HCT116 (cell line): ENCODE measurements at regions of chrX and their contacts with region 1.

Region 1: GRCh38 chrX:70030301-70030767 is 19.4 kb downstream of the AWAT2 start:
- DNase-seq: peak; percentile 22
- ATAC-seq: peak; percentile 80
- H3K4me3 ChIP-seq: no peak overlapping the region
- H3K27ac ChIP-seq: no peak overlapping the region
- H3K4me1 ChIP-seq: peaks cover 2 to 10% of the 10 kb centered on the region in 2 experiments; a peak in 2 of 4 replicates
- H3K27me3 ChIP-seq: no peaks in the 10 kb centered on the region
- CTCF ChIP-seq: peak; percentile 38 to 72 (median 64); a peak in 5 of 6 replicates
- POLR2A ChIP-seq: no peak
- RAD21 ChIP-seq: peak; percentile 76

Region 2: GRCh38 chrX:69493193-69493592 is 537.1 kb before region 1 on chrX:
- CTCF ChIA-PET with region 1: interaction called, 5 read pairs
- POLR2A ChIA-PET with region 1: no interaction called
- RAD21 ChIA-PET with region 1: interaction called in 1 of 2 experiments, 5 read pairs
- intact Hi-C with region 1: loop called (anchors 1 kb)
- DNase-seq: peak; percentile 33
- ATAC-seq: peak; percentile 85
- H3K4me3 ChIP-seq: no peak overlapping the region
- H3K27ac ChIP-seq: no peak overlapping the region
- H3K4me1 ChIP-seq: peaks cover 0 to 6% of the 10 kb centered on the region in 2 experiments; a peak in 1 of 4 replicates
- H3K27me3 ChIP-seq: peaks cover 9% of the 10 kb centered on the region; the same call in 1 of the 2 replicates
- CTCF ChIP-seq: peak; percentile 39 to 53 (median 49); a peak in 5 of 6 replicates
- POLR2A ChIP-seq: no peak
- RAD21 ChIP-seq: peak; percentile 75

Region 3: DNA sequence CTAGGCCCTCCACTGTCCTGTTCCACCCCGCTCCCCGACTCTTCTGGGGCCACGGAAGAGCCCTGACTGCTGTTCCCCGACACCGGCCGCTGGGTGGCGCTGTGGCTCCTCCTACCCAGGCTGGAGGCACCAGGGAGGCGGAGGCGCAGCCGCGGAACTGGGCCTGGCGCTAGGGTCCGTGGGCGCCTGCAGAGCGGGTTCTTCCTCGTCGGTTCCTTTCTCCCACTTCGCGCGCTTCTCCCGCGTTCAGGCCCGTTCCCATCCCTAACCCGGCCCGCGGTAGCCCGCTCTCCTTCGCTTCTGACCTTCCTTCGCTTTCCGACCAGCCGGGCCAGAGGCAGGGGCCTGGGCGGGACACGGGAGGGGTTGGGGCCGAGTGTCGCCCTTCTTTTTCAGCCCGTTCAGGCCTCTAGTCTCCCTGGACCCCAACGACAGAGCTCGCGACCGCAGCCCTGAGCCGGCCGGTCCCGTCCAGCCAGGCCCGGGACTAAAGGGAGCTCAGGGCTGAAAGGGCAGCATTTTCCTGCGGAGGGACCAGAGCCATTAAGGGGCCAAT is 491.9 kb before region 1 on chrX:
- CTCF ChIA-PET with region 1: interaction called, 4 read pairs
- POLR2A ChIA-PET with region 1: no interaction called
- RAD21 ChIA-PET with region 1: no interaction called
- intact Hi-C with region 1: loop called (anchors 2 kb)
- DNase-seq: peak; percentile 29
- ATAC-seq: peak; percentile 98
- H3K4me3 ChIP-seq: no peak overlapping the region
- H3K27ac ChIP-seq: no peak overlapping the region
- H3K4me1 ChIP-seq: peaks cover 0 to 4% of the 10 kb centered on the region in 2 experiments; a peak in 1 of 4 replicates
- H3K27me3 ChIP-seq: no peaks in the 10 kb centered on the region
- CTCF ChIP-seq: peak; percentile 60 to 69 (median 64)
- POLR2A ChIP-seq: no peak
- RAD21 ChIP-seq: peak; percentile 90

Region 4: DNA sequence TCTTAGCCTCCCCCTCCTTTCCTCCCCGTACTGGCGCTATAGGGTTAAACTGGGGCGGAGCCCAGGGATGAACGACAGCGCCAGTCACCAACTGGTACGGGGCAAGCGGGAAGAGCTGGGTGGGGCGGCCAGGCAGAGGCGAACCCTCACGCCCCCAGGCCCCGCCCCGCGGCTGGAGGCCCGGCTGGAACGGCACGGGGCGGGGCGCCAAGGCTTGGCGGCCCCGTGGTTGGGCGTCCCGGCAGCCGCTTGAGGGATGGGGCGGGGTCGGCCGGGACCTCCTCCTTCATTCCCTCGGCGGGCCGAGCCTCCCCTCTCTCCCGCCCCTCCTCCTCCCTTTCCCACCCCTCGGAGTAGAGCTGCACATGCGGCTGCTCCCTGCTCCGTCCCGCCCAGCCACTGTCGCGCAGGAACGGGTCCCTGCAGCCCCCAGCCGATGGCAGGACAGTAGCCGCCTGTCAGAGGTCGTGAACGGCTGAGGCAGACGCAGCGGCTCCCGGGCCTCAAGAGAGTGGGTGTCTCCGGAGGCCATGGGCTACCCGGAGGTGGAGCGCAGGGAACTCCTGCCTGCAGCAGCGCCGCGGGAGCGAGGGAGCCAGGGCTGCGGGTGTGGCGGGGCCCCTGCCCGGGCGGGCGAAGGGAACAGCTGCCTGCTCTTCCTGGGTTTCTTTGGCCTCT is 414.4 kb before region 1 on chrX and contains the start of gene EDA:
- CTCF ChIA-PET with region 1: no interaction called
- POLR2A ChIA-PET with region 1: no interaction called
- RAD21 ChIA-PET with region 1: no interaction called
- intact Hi-C with region 1: loop called (anchors 5 kb)
- DNase-seq: peak; percentile 61
- ATAC-seq: peak; percentile 96
- H3K4me3 ChIP-seq: peak within 1 kb of the TSS; percentile 54 to 61
- H3K27ac ChIP-seq: no peak within 1 kb of the TSS; the same call in 1 of the 2 replicates
- H3K4me1 ChIP-seq: peaks cover 0 to 3% of the 10 kb centered on the region in 2 experiments; a peak in 1 of 4 replicates
- H3K27me3 ChIP-seq: no peaks in the 10 kb centered on the region
- CTCF ChIP-seq: no peak
- POLR2A ChIP-seq: no peak
- RAD21 ChIP-seq: no peak
- total RNA-seq, gene EDA: 5.2 TPM

Region 5: GRCh38 chrX:69664693-69665092 is 365.6 kb before region 1 on chrX:
- CTCF ChIA-PET with region 1: no interaction called
- POLR2A ChIA-PET with region 1: no interaction called
- RAD21 ChIA-PET with region 1: no interaction called
- intact Hi-C with region 1: no loop called
- DNase-seq: no peak
- ATAC-seq: no peak
- H3K4me3 ChIP-seq: no peak overlapping the region
- H3K27ac ChIP-seq: no peak overlapping the region
- H3K4me1 ChIP-seq: no peaks in the 10 kb centered on the region
- H3K27me3 ChIP-seq: no peaks in the 10 kb centered on the region
- CTCF ChIP-seq: no peak
- POLR2A ChIP-seq: no peak
- RAD21 ChIP-seq: no peak